Activated CD4-positive, alpha-beta T cell treated with anti-CD3 and anti-CD28 coated beads for 36 hours (primary cell): ENCODE measurements at regions of chr6 and their contacts with region 1.

Region 1: GRCh38 chr6:110815217-110816109 is at the start of gene CDK19:
- DNase-seq: peak; percentile 99
- ATAC-seq: peak; percentile 85
- H3K4me3 Mint-ChIP-seq: peak within 1 kb of the TSS; percentile 88
- H3K27ac Mint-ChIP-seq: peak within 1 kb of the TSS; percentile 98
- H3K4me1 Mint-ChIP-seq: peaks cover 32% of the 10 kb centered on the region
- H3K27me3 Mint-ChIP-seq: no peaks in the 10 kb centered on the region
- total RNA-seq, gene CDK19: 14.7 to 15.7 TPM

Region 2: DNA sequence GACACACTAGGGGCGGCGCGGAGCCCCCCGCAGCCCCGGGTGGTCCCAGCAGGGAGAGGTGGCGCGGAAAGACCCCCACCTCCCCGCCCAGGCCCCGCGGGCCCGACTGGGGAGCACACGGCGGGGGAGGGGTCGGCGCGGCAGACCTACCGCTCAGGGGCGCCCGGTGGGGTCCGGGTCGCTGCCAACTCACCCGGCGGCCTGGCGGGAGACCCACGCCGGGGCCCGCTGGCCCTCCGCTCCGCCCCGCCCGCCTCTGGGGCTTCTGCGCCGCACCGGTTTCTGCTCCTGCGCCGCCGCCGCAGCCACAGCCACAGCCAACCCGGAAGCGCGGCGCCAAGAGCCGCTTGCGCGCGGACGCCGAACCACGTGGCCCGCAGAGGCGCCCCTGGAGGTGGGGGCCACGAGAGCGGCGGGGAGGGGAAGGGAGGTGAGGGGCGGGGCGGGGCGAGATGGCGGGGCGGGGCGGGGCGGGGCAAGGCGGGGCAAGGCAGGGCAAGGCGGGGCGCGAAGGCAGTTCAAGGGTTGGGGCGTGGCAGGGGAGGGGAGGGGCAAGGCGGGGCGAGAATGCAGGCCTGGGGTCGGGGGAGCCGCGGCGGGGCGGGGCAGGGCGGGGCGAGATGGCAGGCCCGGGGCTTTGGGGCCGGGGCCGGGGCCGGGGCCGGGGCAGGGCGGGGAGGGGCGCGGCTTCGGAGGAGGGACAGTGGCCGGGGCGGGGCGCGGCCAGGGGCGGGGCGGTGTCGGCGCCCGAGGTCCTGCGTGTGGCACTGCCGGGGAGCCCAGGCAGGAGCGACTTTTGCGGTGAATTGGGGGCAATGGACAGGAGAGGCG is 1332.3 kb before region 1 on chr6 and contains the start of gene ZBTB24:
- CTCF ChIA-PET with region 1: no interaction called
- POLR2A ChIA-PET with region 1: no interaction called
- intact Hi-C with region 1: loop called in 1 of 2 experiments (anchors 10 kb)
- DNase-seq: peak; percentile 94
- ATAC-seq: peak; percentile 84
- H3K4me3 Mint-ChIP-seq: peak within 1 kb of the TSS; percentile 96
- H3K27ac Mint-ChIP-seq: peak within 1 kb of the TSS; percentile 94
- H3K4me1 Mint-ChIP-seq: peaks cover 43% of the 10 kb centered on the region
- H3K27me3 Mint-ChIP-seq: no peaks in the 10 kb centered on the region
- total RNA-seq, gene ZBTB24: 12.0 to 14.7 TPM

Region 3: DNA sequence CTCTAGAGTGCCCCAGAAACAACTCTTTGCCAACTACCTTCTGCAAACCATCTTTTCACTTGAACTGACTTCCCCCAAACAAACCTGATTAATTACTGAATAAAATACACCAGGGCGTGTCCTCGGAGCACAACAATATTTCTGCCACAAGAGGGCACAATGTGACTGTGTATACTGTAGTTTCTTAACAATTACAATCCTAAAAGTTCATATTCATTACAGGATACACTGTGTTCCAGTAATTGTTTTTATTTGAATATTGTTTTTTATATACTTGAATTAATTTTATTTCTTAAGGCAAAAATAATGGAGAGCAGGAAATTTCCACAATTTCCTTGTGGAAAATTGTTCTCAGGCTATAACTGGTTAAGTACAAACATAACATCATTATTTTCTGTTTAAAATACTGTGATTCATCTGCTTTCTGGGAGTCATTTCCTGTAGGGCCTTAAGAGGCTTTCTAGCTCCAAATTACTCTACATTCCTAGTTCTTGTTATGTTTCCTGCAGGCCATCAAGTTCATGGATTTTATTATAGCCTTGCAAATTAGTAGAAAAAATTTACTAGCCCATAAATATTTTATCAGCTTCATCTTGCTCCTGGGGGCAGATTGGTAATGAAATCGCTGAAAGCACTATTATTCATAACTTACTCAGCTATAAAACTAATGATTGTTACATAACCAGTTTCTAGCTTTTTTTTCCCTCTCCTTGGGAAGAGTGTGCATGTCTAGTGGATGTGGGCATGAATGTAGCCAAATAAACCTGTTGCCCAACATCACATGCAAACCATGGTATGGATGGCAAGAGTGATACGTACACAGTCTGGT is 287.1 kb before region 1 on chr6:
- CTCF ChIA-PET with region 1: interaction called, 5 read pairs
- POLR2A ChIA-PET with region 1: no interaction called
- intact Hi-C with region 1: loop called in 1 of 2 experiments (anchors 2 kb)
- DNase-seq: peak; percentile 69
- ATAC-seq: peak; percentile 77
- H3K4me3 Mint-ChIP-seq: no peak overlapping the region
- H3K27ac Mint-ChIP-seq: no peak overlapping the region
- H3K4me1 Mint-ChIP-seq: peaks cover 9% of the 10 kb centered on the region
- H3K27me3 Mint-ChIP-seq: peaks cover 4% of the 10 kb centered on the region

Region 4: GRCh38 chr6:110682460-110682853 is 133.0 kb before region 1 on chr6:
- CTCF ChIA-PET with region 1: interaction called, 8 read pairs
- POLR2A ChIA-PET with region 1: interaction called, 4 read pairs
- intact Hi-C with region 1: loop called (anchors 1 to 2 kb)
- DNase-seq: peak; percentile 73
- ATAC-seq: peak; percentile 99
- H3K4me3 Mint-ChIP-seq: no peak overlapping the region
- H3K27ac Mint-ChIP-seq: no peak overlapping the region
- H3K4me1 Mint-ChIP-seq: peaks cover 12% of the 10 kb centered on the region
- H3K27me3 Mint-ChIP-seq: no peaks in the 10 kb centered on the region

Region 5: GRCh38 chr6:110882271-110882613 is 66.8 kb after region 1 on chr6:
- CTCF ChIA-PET with region 1: interaction called, 11 read pairs
- POLR2A ChIA-PET with region 1: interaction called, 231 read pairs
- intact Hi-C with region 1: no loop called
- DNase-seq: no peak
- ATAC-seq: no peak
- H3K4me3 Mint-ChIP-seq: no peak overlapping the region
- H3K27ac Mint-ChIP-seq: peak overlapping the region; percentile 56
- H3K4me1 Mint-ChIP-seq: peaks cover 89% of the 10 kb centered on the region
- H3K27me3 Mint-ChIP-seq: no peaks in the 10 kb centered on the region

Region 6: GRCh38 chr6:110958329-110959192 is 143.1 kb after region 1 on chr6 and contains the start of gene GTF3C6:
- CTCF ChIA-PET with region 1: interaction called, 4 read pairs
- POLR2A ChIA-PET with region 1: interaction called, 26 read pairs
- intact Hi-C with region 1: loop called (anchors 1 kb)
- DNase-seq: peak; percentile 97
- ATAC-seq: peak; percentile 100
- H3K4me3 Mint-ChIP-seq: peak within 1 kb of the TSS; percentile 90
- H3K27ac Mint-ChIP-seq: peak within 1 kb of the TSS; percentile 97
- H3K4me1 Mint-ChIP-seq: peaks cover 14% of the 10 kb centered on the region
- H3K27me3 Mint-ChIP-seq: peaks cover 1% of the 10 kb centered on the region
- total RNA-seq, gene GTF3C6: 93.0 to 106 TPM

Region 7: DNA sequence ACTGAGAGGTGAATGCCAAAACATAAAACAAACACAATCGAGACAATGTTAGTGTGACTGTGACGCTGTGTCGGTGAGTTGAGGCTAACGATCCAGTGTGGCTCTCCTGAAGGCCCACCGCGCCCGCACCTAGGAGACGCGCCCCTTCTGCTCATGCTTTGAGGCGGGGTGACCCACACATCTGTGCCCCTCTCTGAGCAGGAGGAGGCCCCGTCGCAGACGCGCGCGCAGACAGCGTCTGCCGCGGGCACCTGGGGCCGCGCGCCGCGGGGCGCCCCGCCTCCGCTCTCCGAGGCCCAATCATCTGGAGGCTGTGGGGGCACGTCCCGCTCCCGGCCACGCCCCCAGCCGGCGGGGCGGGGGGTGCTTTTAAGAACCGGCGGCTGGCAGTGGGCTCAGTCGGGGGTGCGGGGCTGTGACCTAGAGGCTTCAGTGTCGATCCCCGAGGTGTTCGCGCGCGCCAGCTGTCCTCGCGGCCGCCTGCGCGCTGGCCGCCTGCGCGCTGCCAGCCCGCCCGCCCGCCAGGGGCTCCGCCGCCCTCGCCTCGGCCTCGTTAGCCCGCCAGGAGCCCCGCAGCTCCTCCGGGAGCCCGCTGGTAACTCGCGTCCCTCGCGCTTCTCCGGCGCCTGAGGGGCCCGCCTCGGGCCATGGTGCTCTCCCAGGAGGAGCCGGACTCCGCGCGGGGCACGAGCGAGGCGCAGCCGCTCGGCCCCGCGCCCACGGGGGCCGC is 271.8 kb after region 1 on chr6 and contains the start of gene SLC16A10:
- CTCF ChIA-PET with region 1: no interaction called
- POLR2A ChIA-PET with region 1: no interaction called
- intact Hi-C with region 1: loop called in 1 of 2 experiments (anchors 1 kb)
- DNase-seq: peak; percentile 87
- ATAC-seq: peak; percentile 90
- H3K4me3 Mint-ChIP-seq: peak within 1 kb of the TSS; percentile 91
- H3K27ac Mint-ChIP-seq: peak within 1 kb of the TSS; percentile 90
- H3K4me1 Mint-ChIP-seq: peaks cover 37% of the 10 kb centered on the region
- H3K27me3 Mint-ChIP-seq: no peaks in the 10 kb centered on the region
- total RNA-seq, gene SLC16A10: 6.2 to 7.0 TPM